ENCODE measurements at regions of chr3 and their contacts with region 1.

Region 1: DNA sequence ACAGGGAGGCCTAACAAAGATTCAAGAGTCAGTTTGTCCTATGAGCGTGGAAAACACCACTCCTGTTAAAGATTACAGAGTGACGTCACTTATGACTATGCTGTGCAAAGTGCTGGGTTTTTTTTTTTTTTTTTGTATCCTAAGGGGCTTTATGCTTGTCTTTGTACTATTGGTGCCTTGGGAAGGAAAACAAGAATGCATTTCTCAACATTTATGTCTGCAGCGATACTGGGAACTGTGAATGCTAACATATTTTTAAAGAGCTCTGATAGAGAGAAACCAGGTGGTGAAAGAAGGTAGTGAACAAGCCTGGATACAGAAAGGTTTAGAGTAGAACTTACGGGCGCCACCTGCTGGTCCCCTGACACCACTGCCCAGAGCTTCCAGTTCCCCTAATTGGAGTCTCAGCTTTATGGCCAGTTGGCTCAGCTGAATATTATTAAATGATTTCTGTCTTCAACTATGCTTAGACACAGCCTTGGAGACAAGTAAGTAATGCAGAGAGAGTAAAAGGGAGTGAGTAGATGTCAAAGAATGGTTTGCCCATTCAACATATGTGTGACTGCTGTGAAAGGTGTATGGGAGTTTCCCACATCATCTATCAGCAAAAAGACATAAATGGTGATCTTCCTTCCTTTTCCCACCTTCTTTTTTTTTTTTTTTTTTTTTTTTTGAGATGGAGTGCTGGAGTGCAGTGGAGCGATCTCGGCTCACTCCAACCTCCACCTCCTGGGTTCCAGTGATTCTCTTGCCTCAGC is 807.9 kb upstream of the CFAP20DC start:
- DNase-seq: peak; percentile 90
- H3K4me3 Mint-ChIP-seq: no peak overlapping the region
- H3K27ac Mint-ChIP-seq: peak overlapping the region; percentile 6
- H3K4me1 Mint-ChIP-seq: peaks cover 35% of the 10 kb centered on the region
- H3K27me3 Mint-ChIP-seq: no peaks in the 10 kb centered on the region

Region 2: DNA sequence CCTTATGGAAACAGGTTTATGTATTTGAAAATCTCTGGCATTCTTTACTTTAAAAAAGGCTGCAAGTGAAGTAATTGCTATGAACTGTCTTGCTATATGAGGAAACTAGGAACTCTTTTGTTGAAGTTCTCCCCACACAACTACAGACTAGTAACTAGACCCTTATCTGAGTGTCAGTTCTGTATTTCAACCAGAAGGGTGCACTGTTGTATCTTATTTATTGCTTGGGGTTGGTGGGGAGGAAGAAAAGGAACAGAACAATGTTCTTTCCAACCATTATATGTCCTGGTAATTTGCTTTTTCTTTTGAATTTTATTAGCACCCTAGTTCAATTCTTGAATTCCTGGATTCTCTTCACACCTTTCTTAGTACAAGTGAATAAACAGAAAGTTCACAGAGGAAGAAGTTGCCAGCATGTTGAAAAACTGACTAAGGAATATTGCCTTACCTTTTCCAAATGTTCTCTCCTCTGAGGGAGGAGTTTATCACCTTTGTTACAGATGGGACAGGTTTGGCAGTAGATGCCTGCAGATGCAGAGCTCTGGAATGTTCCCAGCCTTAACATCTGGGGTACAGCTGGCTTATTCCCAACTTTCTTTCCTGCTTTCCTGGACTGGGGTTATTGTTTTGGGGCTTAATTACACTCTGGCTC is 645.5 kb before region 1 on chr3:
- CTCF ChIA-PET with region 1: interaction called, 5 read pairs
- intact Hi-C with region 1: loop called (anchors 1 kb)
- DNase-seq: no peak
- H3K4me3 Mint-ChIP-seq: no peak overlapping the region
- H3K27ac Mint-ChIP-seq: no peak overlapping the region
- H3K4me1 Mint-ChIP-seq: peaks cover 2% of the 10 kb centered on the region
- H3K27me3 Mint-ChIP-seq: no peaks in the 10 kb centered on the region

Region 3: GRCh38 chr3:59313365-59313764 is 544.4 kb before region 1 on chr3:
- CTCF ChIA-PET with region 1: interaction called, 4 read pairs
- intact Hi-C with region 1: loop called (anchors 1 kb)
- DNase-seq: peak; percentile 74
- H3K4me3 Mint-ChIP-seq: no peak overlapping the region
- H3K27ac Mint-ChIP-seq: no peak overlapping the region
- H3K4me1 Mint-ChIP-seq: peaks cover 22% of the 10 kb centered on the region
- H3K27me3 Mint-ChIP-seq: no peaks in the 10 kb centered on the region

Region 4: DNA sequence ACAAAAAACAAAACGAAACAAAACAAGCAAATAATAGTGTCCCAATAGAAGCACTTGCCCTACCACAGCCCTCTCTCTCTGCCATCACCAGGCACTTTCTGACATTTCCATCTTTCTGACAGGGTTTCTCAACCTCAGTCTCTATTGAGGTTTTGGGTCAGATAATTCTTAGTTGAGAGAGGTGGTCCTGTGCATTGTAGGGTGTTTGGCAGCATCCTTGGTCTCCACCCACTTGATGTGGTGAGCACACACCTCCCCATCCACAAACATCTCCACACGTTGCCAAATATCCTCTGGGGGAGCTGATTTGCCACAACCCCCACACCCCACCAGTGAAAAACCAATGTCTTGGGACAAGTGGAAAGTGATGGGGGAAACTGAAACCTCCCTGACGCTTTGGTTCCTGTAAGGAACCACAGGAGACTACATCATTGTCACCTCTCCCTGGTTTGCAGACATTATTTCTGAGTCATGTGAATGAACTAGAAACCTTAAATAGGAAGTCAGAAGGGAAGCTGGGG is 74.2 kb before region 1 on chr3:
- CTCF ChIA-PET with region 1: no interaction called
- intact Hi-C with region 1: loop called (anchors 2 kb)
- DNase-seq: peak; percentile 61
- H3K4me3 Mint-ChIP-seq: no peak overlapping the region
- H3K27ac Mint-ChIP-seq: no peak overlapping the region
- H3K4me1 Mint-ChIP-seq: peaks cover 35% of the 10 kb centered on the region
- H3K27me3 Mint-ChIP-seq: no peaks in the 10 kb centered on the region

Region 5: DNA sequence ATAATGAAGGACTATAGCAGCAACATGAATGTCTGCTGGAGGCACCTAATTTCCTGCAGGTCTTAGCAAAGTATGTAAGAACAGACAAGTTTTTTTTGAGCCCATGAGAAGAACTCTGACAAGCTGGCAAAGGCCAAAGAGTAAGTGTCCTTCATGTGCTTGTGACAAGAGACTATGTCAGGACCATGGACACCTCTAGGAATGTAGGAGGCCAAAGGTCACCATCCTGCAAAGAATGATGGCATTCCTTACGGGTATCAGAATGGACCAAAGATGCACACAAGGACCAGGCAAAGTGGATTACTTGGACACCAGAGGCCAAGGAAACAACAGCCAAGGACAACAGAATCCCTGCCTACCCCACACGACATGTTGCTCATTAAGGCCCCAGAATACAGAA is 50.5 kb after region 1 on chr3:
- CTCF ChIA-PET with region 1: no interaction called
- intact Hi-C with region 1: no loop called
- DNase-seq: no peak
- H3K4me3 Mint-ChIP-seq: no peak overlapping the region
- H3K27ac Mint-ChIP-seq: no peak overlapping the region
- H3K4me1 Mint-ChIP-seq: peaks cover 71% of the 10 kb centered on the region
- H3K27me3 Mint-ChIP-seq: no peaks in the 10 kb centered on the region

Region 6: GRCh38 chr3:60431599-60431958 is 573.8 kb after region 1 on chr3:
- CTCF ChIA-PET with region 1: no interaction called
- intact Hi-C with region 1: loop called (anchors 10 kb)
- DNase-seq: peak; percentile 23
- H3K4me3 Mint-ChIP-seq: no peak overlapping the region
- H3K27ac Mint-ChIP-seq: no peak overlapping the region
- H3K4me1 Mint-ChIP-seq: peaks cover 25% of the 10 kb centered on the region
- H3K27me3 Mint-ChIP-seq: no peaks in the 10 kb centered on the region